Activated T-helper 2 cell treated with anti-CD3 and anti-CD28 coated beads, Interferon-gamma antibody, Interleukin-2, Interleukin-4, amounts not matched to agents 10 μg/mL and 5 μg/mL and 100 μg/mL, durations not matched to agents 14 hours and 24 hours and 36 hours (primary cell): ENCODE measurements at regions of chrX and their contacts with region 1.

Region 1: DNA sequence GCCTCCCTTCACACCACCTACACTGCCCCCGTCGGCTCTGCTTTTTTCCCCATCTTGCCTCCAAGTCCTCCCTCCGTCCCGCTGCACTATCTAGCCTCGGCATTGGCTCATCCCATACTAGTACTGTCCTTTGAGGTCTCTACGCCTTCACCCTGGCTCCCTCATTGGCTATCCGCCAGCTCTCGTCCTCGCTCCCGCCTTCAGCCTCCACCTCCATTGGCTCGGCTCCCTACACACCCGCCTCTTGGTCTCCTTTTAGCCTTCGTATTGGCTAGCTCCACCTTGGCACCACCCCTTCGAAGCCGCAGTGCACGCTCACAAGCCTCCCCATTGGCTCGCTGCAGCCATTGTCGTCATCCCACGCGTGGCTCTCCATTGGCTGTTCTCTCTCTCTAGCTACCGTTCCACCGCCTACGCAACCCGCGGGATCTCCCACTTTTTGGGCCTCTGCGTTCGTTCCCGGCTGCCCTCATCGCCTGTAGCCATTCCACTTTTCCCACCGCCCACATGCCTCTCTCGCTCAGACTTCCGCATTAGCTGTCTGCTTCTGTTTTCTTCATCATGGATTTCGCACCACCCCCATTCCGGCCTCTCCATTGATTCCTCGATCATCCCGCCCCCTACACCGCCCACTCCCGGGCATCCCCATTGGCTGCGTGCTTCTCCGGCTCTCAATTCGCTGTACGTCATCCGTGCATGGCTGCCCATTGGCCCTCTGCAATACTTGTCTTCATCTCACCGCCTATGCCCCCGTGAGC is 404 bp upstream of the PPP1R3F start:
- DNase-seq: peak; percentile 92
- H3K4me3 Mint-ChIP-seq: peak overlapping the region; percentile 87
- H3K27ac Mint-ChIP-seq: peak overlapping the region; percentile 98
- H3K4me1 Mint-ChIP-seq: peaks cover 43% of the 10 kb centered on the region
- H3K27me3 Mint-ChIP-seq: no peaks in the 10 kb centered on the region

Region 2: GRCh38 chrX:48107717-48108116 is 1161.5 kb before region 1 on chrX:
- intact Hi-C with region 1: no loop called
- DNase-seq: no peak
- H3K4me3 Mint-ChIP-seq: no peak overlapping the region
- H3K27ac Mint-ChIP-seq: no peak overlapping the region
- H3K4me1 Mint-ChIP-seq: no peaks in the 10 kb centered on the region
- H3K27me3 Mint-ChIP-seq: peaks cover 2% of the 10 kb centered on the region

Region 3: GRCh38 chrX:48937054-48937907 is 331.9 kb before region 1 on chrX:
- intact Hi-C with region 1: loop called (anchors 5 kb)
- DNase-seq: peak; percentile 87
- H3K4me3 Mint-ChIP-seq: peak overlapping the region; percentile 71
- H3K27ac Mint-ChIP-seq: peak overlapping the region; percentile 99
- H3K4me1 Mint-ChIP-seq: peaks cover 71% of the 10 kb centered on the region
- H3K27me3 Mint-ChIP-seq: no peaks in the 10 kb centered on the region

Region 4: GRCh38 chrX:49199906-49200771 is 69.0 kb before region 1 on chrX and contains the start of gene SYP:
- intact Hi-C with region 1: loop called (anchors 2 kb)
- DNase-seq: peak; percentile 82
- H3K4me3 Mint-ChIP-seq: peak within 1 kb of the TSS; percentile 61
- H3K27ac Mint-ChIP-seq: peak within 1 kb of the TSS; percentile 28
- H3K4me1 Mint-ChIP-seq: peaks cover 14% of the 10 kb centered on the region
- H3K27me3 Mint-ChIP-seq: no peaks in the 10 kb centered on the region
- total RNA-seq, gene SYP: 3.8 and 4.3 TPM in 2 replicates

Region 5: DNA sequence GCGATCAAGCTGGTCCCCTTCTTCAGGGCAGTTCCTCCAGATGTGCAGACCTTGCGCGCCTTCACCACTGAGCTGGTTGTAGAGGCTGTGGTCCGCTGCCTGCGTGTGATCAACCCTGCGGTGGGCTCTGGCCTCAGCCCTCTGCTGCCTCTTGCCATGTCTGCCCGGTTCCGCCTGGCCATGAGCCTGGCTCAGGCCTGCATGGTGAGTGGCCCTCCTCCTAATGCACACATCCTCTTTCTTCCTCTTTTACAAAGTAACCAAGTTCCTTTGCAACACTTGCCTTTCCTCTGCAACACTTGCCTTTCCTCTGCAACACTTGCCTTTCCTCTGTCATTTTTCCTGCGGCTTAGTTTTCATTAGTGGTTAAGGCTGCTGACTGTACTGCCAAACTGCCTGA is 32.1 kb before region 1 on chrX:
- intact Hi-C with region 1: loop called (anchors 2 kb)
- DNase-seq: no peak
- H3K4me3 Mint-ChIP-seq: peak overlapping the region; percentile 74
- H3K27ac Mint-ChIP-seq: peak overlapping the region; percentile 79
- H3K4me1 Mint-ChIP-seq: peaks cover 20% of the 10 kb centered on the region
- H3K27me3 Mint-ChIP-seq: no peaks in the 10 kb centered on the region